ENCODE measurements at regions of chr20 and their contacts with region 1.

Region 1: DNA sequence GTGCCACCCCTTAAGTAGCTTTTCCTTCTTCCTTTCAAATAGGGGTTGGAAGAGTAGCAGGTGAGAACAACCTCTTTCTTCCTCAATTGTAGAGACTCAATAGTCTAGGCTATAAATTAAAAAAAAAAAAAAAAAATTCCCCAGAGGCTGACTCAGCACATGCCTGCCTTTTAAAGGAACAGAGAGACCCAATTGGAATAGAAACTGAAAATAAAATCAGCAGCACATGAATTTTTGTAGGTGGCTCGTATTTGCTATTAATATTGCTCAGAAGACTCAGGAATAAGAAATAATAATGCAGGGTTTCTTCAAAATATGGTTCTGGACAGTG is 19.3 kb downstream of the TOP1 start:
- DNase-seq: no peak
- H3K4me3 Mint-ChIP-seq: peak overlapping the region; percentile 71
- H3K27ac Mint-ChIP-seq: peak overlapping the region; percentile 92
- H3K4me1 Mint-ChIP-seq: peaks cover 84% of the 10 kb centered on the region
- H3K27me3 Mint-ChIP-seq: no peaks in the 10 kb centered on the region

Region 2: GRCh38 chr20:41003143-41003883 is 44.6 kb before region 1 on chr20:
- CTCF ChIA-PET with region 1: no interaction called
- intact Hi-C with region 1: loop called (anchors 1 kb)
- DNase-seq: peak; percentile 77
- H3K4me3 Mint-ChIP-seq: peak overlapping the region; percentile 45
- H3K27ac Mint-ChIP-seq: peak overlapping the region; percentile 90
- H3K4me1 Mint-ChIP-seq: peaks cover 22% of the 10 kb centered on the region
- H3K27me3 Mint-ChIP-seq: no peaks in the 10 kb centered on the region

Region 3: GRCh38 chr20:41057999-41058896 is 10.3 kb after region 1 on chr20:
- CTCF ChIA-PET with region 1: no interaction called
- intact Hi-C with region 1: loop called (anchors 1 kb)
- DNase-seq: peak; percentile 56
- H3K4me3 Mint-ChIP-seq: no peak overlapping the region
- H3K27ac Mint-ChIP-seq: peak overlapping the region; percentile 54
- H3K4me1 Mint-ChIP-seq: peaks cover 52% of the 10 kb centered on the region
- H3K27me3 Mint-ChIP-seq: no peaks in the 10 kb centered on the region

Region 4: DNA sequence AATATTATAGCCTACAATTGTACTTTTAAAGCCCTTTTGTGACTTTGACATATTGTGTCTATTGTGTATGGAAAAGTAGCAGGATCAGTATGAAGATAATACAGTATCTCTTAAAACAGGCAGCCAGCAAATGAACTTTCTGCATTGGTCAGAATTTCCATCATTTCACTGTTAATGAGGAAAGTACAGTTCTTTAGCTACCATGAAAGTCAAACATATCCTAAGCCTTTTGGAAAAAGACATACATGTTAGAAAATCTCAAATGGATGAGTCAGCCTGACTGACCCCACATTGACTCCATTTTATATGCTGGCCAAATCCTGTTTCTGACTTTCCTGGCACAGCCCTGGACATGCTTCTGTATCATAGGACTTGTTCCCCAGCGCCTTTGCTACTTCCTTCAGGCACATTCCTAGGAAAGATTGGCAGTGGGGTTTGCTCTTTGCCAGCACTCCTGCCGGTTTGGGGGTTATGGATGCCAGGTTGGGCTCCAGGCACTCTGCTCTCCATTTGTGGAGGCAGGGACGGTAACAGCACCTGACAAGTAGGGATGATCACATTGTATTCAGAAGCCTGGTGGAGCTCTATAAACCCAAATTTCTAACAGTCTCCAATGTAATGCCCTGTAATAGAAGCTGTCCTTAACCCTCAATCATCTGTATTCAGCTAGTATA is 24.4 kb after region 1 on chr20:
- CTCF ChIA-PET with region 1: interaction called, 6 read pairs
- intact Hi-C with region 1: loop called (anchors 1 kb)
- DNase-seq: no peak
- H3K4me3 Mint-ChIP-seq: no peak overlapping the region
- H3K27ac Mint-ChIP-seq: peak overlapping the region; percentile 82
- H3K4me1 Mint-ChIP-seq: peaks cover 78% of the 10 kb centered on the region
- H3K27me3 Mint-ChIP-seq: no peaks in the 10 kb centered on the region

Region 5: GRCh38 chr20:41095110-41095969 is 47.4 kb after region 1 on chr20:
- CTCF ChIA-PET with region 1: interaction called, 5 read pairs
- intact Hi-C with region 1: loop called (anchors 2 kb)
- DNase-seq: peak; percentile 70
- H3K4me3 Mint-ChIP-seq: no peak overlapping the region
- H3K27ac Mint-ChIP-seq: peak overlapping the region; percentile 61
- H3K4me1 Mint-ChIP-seq: peaks cover 14% of the 10 kb centered on the region
- H3K27me3 Mint-ChIP-seq: no peaks in the 10 kb centered on the region